Aorta (tissue), 5 donors: ENCODE measurements at regions of chr14 and their contacts with region 1.

Region 1: DNA sequence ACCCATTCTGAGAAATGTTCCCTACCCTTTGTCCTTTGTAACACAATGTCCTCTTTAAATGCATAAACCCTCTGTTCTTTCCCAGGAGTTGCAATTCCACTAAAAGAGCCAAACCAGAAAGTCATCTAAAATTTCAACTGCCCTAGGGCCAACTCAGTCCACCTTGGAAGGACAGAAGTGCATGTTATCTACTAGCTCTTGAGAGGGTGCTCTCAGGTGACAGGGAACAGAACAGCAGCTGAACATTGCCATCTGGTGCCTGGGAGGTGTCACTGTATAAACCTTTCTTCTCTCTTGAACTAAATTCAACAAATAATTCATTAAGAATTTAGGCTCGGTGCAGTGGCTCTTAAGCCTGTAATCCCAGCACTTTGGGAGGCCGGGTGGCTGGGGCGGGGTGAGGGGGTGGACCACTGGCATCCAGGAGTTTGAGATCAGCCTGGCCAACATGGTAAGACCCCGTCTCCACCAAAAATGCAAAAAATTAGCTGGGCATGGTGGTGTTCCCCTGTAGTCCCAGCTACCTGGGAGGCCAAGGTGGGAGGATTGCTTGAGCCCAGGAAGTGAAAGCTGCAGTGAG is 10.3 kb upstream of the FERMT2 start:
- DNase-seq: no peak
- ATAC-seq: peak; percentile 88
- H3K4me3 ChIP-seq: no peak overlapping the region
- H3K27ac ChIP-seq: no peak overlapping the region
- H3K4me1 ChIP-seq: no peaks in the 10 kb centered on the region
- H3K27me3 ChIP-seq: no peaks in the 10 kb centered on the region

Region 2: DNA sequence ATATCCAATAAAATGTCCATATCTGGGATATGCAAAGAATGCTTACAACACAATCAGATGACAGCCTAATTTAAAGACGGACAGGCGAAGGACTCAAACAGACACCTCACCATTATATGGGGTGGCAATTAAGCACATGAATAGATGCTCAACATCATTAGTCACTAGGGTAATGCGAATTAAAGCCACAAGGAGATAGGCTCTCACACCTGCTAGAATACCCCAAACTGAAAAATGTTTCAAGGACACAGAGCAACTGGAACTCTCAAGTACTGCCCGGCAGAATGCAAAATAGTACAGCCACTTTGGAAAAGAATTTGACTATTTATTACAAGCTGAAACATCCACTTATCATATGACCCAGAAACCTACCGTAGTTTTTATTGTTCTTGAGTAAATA is 53.2 kb before region 1 on chr14:
- intact Hi-C with region 1: no loop called
- DNase-seq: no peak
- ATAC-seq: no peak
- H3K4me3 ChIP-seq: no peak overlapping the region
- H3K27ac ChIP-seq: no peak overlapping the region
- H3K4me1 ChIP-seq: peaks cover 4 to 16% of the 10 kb centered on the region in 2 donors
- H3K27me3 ChIP-seq: no peaks in the 10 kb centered on the region

Region 3: DNA sequence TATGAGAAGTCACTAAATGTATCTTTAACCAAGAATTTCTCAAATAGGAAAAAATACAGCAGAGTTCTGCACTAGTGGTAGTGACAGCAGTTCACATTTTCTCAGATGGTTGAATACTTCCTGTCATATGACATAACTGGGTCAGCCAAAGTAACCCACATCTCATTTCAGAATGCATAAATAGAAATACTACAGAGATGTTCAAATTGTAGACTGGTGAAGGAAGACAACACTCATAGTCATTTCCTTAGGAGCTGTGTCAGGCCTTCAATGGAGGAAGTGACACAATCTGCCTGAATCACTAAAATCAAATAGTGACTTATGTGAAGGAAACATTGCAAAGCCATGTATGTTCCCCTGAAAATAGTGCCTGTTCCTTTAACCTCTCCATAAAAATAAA is 42.7 kb before region 1 on chr14:
- intact Hi-C with region 1: no loop called
- DNase-seq: no peak
- ATAC-seq: peak; percentile 61
- H3K4me3 ChIP-seq: no peak overlapping the region
- H3K27ac ChIP-seq: peak overlapping the region in 1 of 2 donors; percentile 28
- H3K4me1 ChIP-seq: peaks cover 9 to 21% of the 10 kb centered on the region in 2 donors
- H3K27me3 ChIP-seq: no peaks in the 10 kb centered on the region

Region 4: GRCh38 chr14:53047307-53048069 is 86.3 kb after region 1 on chr14:
- intact Hi-C with region 1: loop called in 1 of 2 experiments (anchors 5 kb)
- DNase-seq: no peak
- ATAC-seq: no peak
- H3K4me3 ChIP-seq: no peak overlapping the region
- H3K27ac ChIP-seq: no peak overlapping the region
- H3K4me1 ChIP-seq: peaks cover under 1 to 4% of the 10 kb centered on the region in 2 donors
- H3K27me3 ChIP-seq: no peaks in the 10 kb centered on the region